ENCODE measurements at regions of chr12 and their contacts with region 1.

Region 1: DNA sequence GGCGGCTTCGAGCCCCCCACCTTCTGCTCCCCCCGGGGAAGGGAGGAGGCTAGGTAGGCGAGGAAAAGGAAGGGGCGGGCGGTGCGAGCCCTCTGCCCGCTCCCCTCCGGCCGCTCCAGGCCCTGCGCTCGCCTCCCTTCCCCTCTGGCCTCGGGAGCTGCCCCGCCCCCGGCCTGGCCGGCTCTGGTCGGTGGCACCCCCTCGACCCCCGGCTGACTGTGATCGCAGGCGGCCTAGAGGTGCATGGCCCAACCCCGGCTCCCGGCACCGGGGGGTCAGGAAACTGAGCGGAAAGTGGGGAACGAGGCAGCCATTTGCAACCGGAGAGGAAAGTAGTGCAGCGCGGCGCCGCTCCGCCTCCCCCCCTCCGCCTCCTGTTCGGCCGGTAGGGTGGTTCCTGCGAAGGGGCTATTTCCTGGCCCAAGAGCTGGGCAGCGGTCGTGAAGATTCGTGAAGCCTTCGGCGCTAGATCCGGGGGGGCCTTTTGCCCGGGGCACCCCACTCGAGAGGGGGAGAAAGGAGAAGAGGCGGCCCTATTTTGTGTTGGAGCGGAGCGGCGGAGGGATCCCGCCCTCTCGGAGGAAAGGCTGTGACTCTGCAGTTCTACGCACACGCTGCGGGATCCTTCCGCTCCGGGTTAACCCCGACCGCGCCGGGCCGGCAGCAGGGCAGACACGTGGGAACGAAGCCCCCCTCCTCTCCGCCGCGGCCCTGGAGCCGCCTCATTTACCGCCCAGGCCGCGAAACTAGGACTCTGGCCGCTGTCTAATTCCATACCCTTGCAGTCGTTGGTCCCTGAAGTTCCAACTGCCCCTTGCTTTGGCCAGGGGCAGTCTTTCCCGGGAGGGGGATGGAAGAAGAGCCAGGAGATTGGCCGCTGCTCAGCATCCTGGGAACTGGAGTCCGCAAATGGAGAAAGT is at the start of gene KMT2D:
- DNase-seq: peak; percentile 72 to 96 (median 87)
- ATAC-seq: peak; percentile 71
- H3K4me3 ChIP-seq: peak within 1 kb of the TSS; percentile 97 to 100
- H3K4me3 Mint-ChIP-seq: peak within 1 kb of the TSS; percentile 98
- H3K27ac ChIP-seq: peak within 1 kb of the TSS; percentile 87 to 97
- H3K27ac Mint-ChIP-seq: peak within 1 kb of the TSS; percentile 98
- H3K4me1 ChIP-seq: peaks cover 45% of the 10 kb centered on the region
- H3K4me1 Mint-ChIP-seq: peaks cover 52% of the 10 kb centered on the region
- H3K27me3 ChIP-seq: no peaks in the 10 kb centered on the region
- H3K27me3 Mint-ChIP-seq: no peaks in the 10 kb centered on the region
- CTCF ChIP-seq: no peak
- total RNA-seq, gene KMT2D: 112 to 127 TPM

Region 2: GRCh38 chr12:49043856-49044258 is 16.6 kb before region 1 on chr12:
- CTCF ChIA-PET with region 1: interaction called, 13 read pairs
- POLR2A ChIA-PET with region 1: interaction called, 4 read pairs
- intact Hi-C with region 1: no loop called
- DNase-seq: peak; percentile 67 to 90 (median 84)
- ATAC-seq: peak; percentile 87
- H3K4me3 ChIP-seq: no peak overlapping the region
- H3K4me3 Mint-ChIP-seq: no peak overlapping the region
- H3K27ac ChIP-seq: peak overlapping the region; percentile 29 to 55
- H3K27ac Mint-ChIP-seq: peak overlapping the region; percentile 24
- H3K4me1 ChIP-seq: no peaks in the 10 kb centered on the region
- H3K4me1 Mint-ChIP-seq: peaks cover 10% of the 10 kb centered on the region
- H3K27me3 ChIP-seq: no peaks in the 10 kb centered on the region
- H3K27me3 Mint-ChIP-seq: no peaks in the 10 kb centered on the region
- CTCF ChIP-seq: peak; percentile 77

Region 3: DNA sequence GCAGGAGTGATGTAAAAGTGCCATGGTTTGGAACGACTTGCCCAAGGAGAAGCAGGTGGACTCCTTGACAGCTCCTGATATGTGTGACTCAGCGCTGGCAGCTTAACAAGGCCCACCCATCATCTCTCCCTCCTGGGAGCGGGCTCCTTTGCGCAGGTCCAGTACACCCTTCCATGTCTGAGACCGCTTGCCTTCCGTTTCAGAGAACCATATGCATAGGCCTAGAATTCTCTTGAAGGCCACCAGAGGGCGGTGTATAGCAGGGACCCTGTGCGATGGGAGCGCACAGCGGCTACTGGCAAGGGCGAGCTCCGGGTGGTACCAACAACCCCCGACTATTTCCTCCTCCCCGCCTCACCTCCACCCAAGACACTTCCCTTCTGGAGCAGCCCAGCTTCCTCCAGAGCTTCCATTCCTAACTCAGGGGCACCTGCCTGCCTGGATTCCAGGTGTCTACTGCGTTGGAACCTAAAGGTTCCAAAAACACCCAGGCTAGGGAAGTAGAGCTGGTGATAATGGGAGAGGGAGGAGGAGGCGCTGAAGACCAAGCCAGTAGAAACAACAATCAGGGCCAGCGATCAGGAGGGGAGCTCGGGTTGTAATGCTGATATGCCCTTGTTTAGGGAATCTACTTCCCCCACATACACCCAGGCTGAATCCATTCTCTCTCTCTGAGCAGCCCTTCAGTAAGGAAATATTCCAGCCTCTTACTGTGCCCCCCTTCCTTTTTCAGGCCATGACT is 27.9 kb after region 1 on chr12:
- CTCF ChIA-PET with region 1: interaction called, 129 read pairs
- POLR2A ChIA-PET with region 1: interaction called, 3 read pairs
- intact Hi-C with region 1: loop called (anchors 1 to 2 kb)
- DNase-seq: peak; percentile 19 to 89 (median 70)
- ATAC-seq: peak; percentile 88
- H3K4me3 ChIP-seq: no peak overlapping the region
- H3K4me3 Mint-ChIP-seq: no peak overlapping the region
- H3K27ac ChIP-seq: no peak overlapping the region
- H3K27ac Mint-ChIP-seq: no peak overlapping the region
- H3K4me1 ChIP-seq: peaks cover 45% of the 10 kb centered on the region
- H3K4me1 Mint-ChIP-seq: peaks cover 36% of the 10 kb centered on the region
- H3K27me3 ChIP-seq: peaks cover 45 to 47% of the 10 kb centered on the region in 2 experiments
- H3K27me3 Mint-ChIP-seq: peaks cover 44% of the 10 kb centered on the region
- CTCF ChIP-seq: peak; percentile 79

Region 4: DNA sequence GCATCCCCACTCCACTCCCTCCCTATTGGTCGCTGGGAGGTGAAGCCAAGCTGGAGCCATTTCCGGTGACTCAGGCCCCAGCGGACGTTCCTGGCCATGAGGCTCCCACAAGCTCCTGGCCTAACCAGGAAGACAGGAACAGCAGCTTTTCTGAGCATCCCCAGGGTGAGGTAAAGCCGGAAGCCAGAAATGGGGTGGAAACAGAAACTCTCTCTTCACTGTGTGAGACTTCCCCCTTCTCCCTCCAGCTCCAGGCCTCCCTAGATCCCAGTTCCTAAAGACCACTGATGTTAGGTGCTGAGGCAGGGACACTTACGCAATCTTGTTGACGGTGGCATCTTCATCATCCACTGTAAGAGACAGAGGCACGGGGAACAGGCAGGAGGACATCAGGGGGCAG is 45.1 kb after region 1 on chr12:
- CTCF ChIA-PET with region 1: interaction called, 70 read pairs
- POLR2A ChIA-PET with region 1: interaction called, 6 read pairs
- intact Hi-C with region 1: loop called (anchors 1 to 5 kb)
- DNase-seq: no peak
- ATAC-seq: no peak
- H3K4me3 ChIP-seq: no peak overlapping the region
- H3K4me3 Mint-ChIP-seq: no peak overlapping the region
- H3K27ac ChIP-seq: no peak overlapping the region
- H3K27ac Mint-ChIP-seq: no peak overlapping the region
- H3K4me1 ChIP-seq: peaks cover 12% of the 10 kb centered on the region
- H3K4me1 Mint-ChIP-seq: peaks cover 40% of the 10 kb centered on the region
- H3K27me3 ChIP-seq: no peaks in the 10 kb centered on the region
- H3K27me3 Mint-ChIP-seq: no peaks in the 10 kb centered on the region
- CTCF ChIP-seq: no peak

Region 5: GRCh38 chr12:49130151-49131050 is 69.9 kb after region 1 on chr12:
- CTCF ChIA-PET with region 1: interaction called, 17 read pairs
- POLR2A ChIA-PET with region 1: interaction called, 7 read pairs
- intact Hi-C with region 1: loop called in 1 of 2 experiments (anchors 1 kb)
- DNase-seq: peak; percentile 78 to 97 (median 92)
- ATAC-seq: peak; percentile 67
- H3K4me3 ChIP-seq: peak overlapping the region; percentile 88 to 91
- H3K4me3 Mint-ChIP-seq: peak overlapping the region; percentile 96
- H3K27ac ChIP-seq: peak overlapping the region; percentile 90 to 96
- H3K27ac Mint-ChIP-seq: peak overlapping the region; percentile 99
- H3K4me1 ChIP-seq: peaks cover 25% of the 10 kb centered on the region
- H3K4me1 Mint-ChIP-seq: peaks cover 47% of the 10 kb centered on the region
- H3K27me3 ChIP-seq: no peaks in the 10 kb centered on the region
- H3K27me3 Mint-ChIP-seq: no peaks in the 10 kb centered on the region
- CTCF ChIP-seq: peak; percentile 96

Region 6: GRCh38 chr12:49232940-49233841 is 172.7 kb after region 1 on chr12:
- CTCF ChIA-PET with region 1: interaction called, 6 read pairs
- POLR2A ChIA-PET with region 1: interaction called, 3 read pairs
- intact Hi-C with region 1: loop called (anchors 1 to 2 kb)
- DNase-seq: peak in 1 of 9 experiments; percentile 13
- ATAC-seq: no peak
- H3K4me3 ChIP-seq: no peak overlapping the region
- H3K4me3 Mint-ChIP-seq: peak overlapping the region; percentile 69
- H3K27ac ChIP-seq: no peak overlapping the region
- H3K27ac Mint-ChIP-seq: no peak overlapping the region
- H3K4me1 ChIP-seq: peaks cover 8% of the 10 kb centered on the region
- H3K4me1 Mint-ChIP-seq: peaks cover 10% of the 10 kb centered on the region
- H3K27me3 ChIP-seq: no peaks in the 10 kb centered on the region
- H3K27me3 Mint-ChIP-seq: no peaks in the 10 kb centered on the region
- CTCF ChIP-seq: no peak